ENCODE measurements at regions of chrX and their contacts with region 1.

Region 1: GRCh38 chrX:48521353-48522243 is at the start of gene EBP:
- DNase-seq: peak; percentile 87 to 97 (median 92)
- ATAC-seq: peak; percentile 96
- H3K4me3 ChIP-seq: peak within 1 kb of the TSS; percentile 76
- H3K4me3 Mint-ChIP-seq: peak within 1 kb of the TSS; percentile 92
- H3K27ac ChIP-seq: peak within 1 kb of the TSS; percentile 65
- H3K27ac Mint-ChIP-seq: peak within 1 kb of the TSS; percentile 89
- H3K4me1 ChIP-seq: peaks cover 41% of the 10 kb centered on the region
- H3K4me1 Mint-ChIP-seq: peaks cover 35% of the 10 kb centered on the region
- H3K27me3 ChIP-seq: no peaks in the 10 kb centered on the region
- H3K27me3 Mint-ChIP-seq: no peaks in the 10 kb centered on the region
- CTCF ChIP-seq: no peak
- total RNA-seq, gene EBP: 38.1 to 41.1 TPM

Region 2: GRCh38 chrX:48058621-48059295 is 462.8 kb before region 1 on chrX:
- CTCF ChIA-PET with region 1: no interaction called
- POLR2A ChIA-PET with region 1: no interaction called
- intact Hi-C with region 1: no loop called
- DNase-seq: no peak
- ATAC-seq: no peak
- H3K4me3 ChIP-seq: no peak overlapping the region
- H3K4me3 Mint-ChIP-seq: no peak overlapping the region
- H3K27ac ChIP-seq: no peak overlapping the region
- H3K27ac Mint-ChIP-seq: no peak overlapping the region
- H3K4me1 ChIP-seq: no peaks in the 10 kb centered on the region
- H3K4me1 Mint-ChIP-seq: no peaks in the 10 kb centered on the region
- H3K27me3 ChIP-seq: no peaks in the 10 kb centered on the region
- H3K27me3 Mint-ChIP-seq: no peaks in the 10 kb centered on the region
- CTCF ChIP-seq: no peak

Region 3: GRCh38 chrX:48498374-48498809 is 23.2 kb before region 1 on chrX:
- CTCF ChIA-PET with region 1: no interaction called
- POLR2A ChIA-PET with region 1: no interaction called
- intact Hi-C with region 1: no loop called
- DNase-seq: no peak
- ATAC-seq: no peak
- H3K4me3 ChIP-seq: no peak overlapping the region
- H3K4me3 Mint-ChIP-seq: no peak overlapping the region
- H3K27ac ChIP-seq: no peak overlapping the region
- H3K27ac Mint-ChIP-seq: no peak overlapping the region
- H3K4me1 ChIP-seq: no peaks in the 10 kb centered on the region
- H3K4me1 Mint-ChIP-seq: no peaks in the 10 kb centered on the region
- H3K27me3 ChIP-seq: no peaks in the 10 kb centered on the region
- H3K27me3 Mint-ChIP-seq: no peaks in the 10 kb centered on the region
- CTCF ChIP-seq: no peak

Region 4: DNA sequence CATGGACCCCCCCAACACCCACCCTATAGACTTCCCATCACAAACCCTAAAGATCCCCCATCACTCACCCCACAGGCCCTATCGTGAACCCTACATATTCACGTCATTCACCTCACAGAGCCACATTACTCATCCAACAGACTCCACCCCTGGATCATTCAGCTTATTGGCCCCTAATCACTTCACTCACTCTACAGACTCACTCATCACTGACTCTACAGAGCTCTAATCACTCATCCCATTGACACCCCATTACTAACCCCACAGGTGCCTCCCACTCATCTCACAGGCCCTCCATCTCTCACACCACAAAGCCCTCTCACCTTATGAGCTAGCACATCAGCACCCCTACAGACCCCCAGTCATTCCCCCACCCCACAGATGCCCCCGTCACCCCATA is 11.6 kb after region 1 on chrX:
- CTCF ChIA-PET with region 1: no interaction called
- POLR2A ChIA-PET with region 1: interaction called, 4 read pairs
- intact Hi-C with region 1: loop called in 1 of 2 experiments (anchors 1 kb)
- DNase-seq: no peak
- ATAC-seq: no peak
- H3K4me3 ChIP-seq: no peak overlapping the region
- H3K4me3 Mint-ChIP-seq: no peak overlapping the region
- H3K27ac ChIP-seq: no peak overlapping the region
- H3K27ac Mint-ChIP-seq: no peak overlapping the region
- H3K4me1 ChIP-seq: peaks cover 7% of the 10 kb centered on the region
- H3K4me1 Mint-ChIP-seq: no peaks in the 10 kb centered on the region
- H3K27me3 ChIP-seq: no peaks in the 10 kb centered on the region
- H3K27me3 Mint-ChIP-seq: no peaks in the 10 kb centered on the region
- CTCF ChIP-seq: no peak

Region 5: GRCh38 chrX:48597353-48598264 is 76.0 kb after region 1 on chrX and contains the start of gene WDR13:
- CTCF ChIA-PET with region 1: no interaction called
- POLR2A ChIA-PET with region 1: interaction called, 3 read pairs
- intact Hi-C with region 1: loop called in 1 of 2 experiments (anchors 5 kb)
- DNase-seq: peak; percentile 81 to 95 (median 90)
- ATAC-seq: peak; percentile 81
- H3K4me3 ChIP-seq: peak within 1 kb of the TSS; percentile 90
- H3K4me3 Mint-ChIP-seq: peak within 1 kb of the TSS; percentile 98
- H3K27ac ChIP-seq: peak within 1 kb of the TSS; percentile 96 to 99
- H3K27ac Mint-ChIP-seq: peak within 1 kb of the TSS; percentile 100
- H3K4me1 ChIP-seq: peaks cover 19% of the 10 kb centered on the region
- H3K4me1 Mint-ChIP-seq: peaks cover 15% of the 10 kb centered on the region
- H3K27me3 ChIP-seq: no peaks in the 10 kb centered on the region
- H3K27me3 Mint-ChIP-seq: no peaks in the 10 kb centered on the region
- CTCF ChIP-seq: no peak
- total RNA-seq, gene WDR13: 37.9 to 43.4 TPM

Region 6: GRCh38 chrX:49163555-49164419 is 642.2 kb after region 1 on chrX:
- CTCF ChIA-PET with region 1: no interaction called
- POLR2A ChIA-PET with region 1: no interaction called
- intact Hi-C with region 1: no loop called
- DNase-seq: peak; percentile 61 to 92 (median 78)
- ATAC-seq: peak; percentile 58
- H3K4me3 ChIP-seq: peak overlapping the region; percentile 50
- H3K4me3 Mint-ChIP-seq: peak overlapping the region; percentile 86
- H3K27ac ChIP-seq: peak overlapping the region; percentile 65 to 72
- H3K27ac Mint-ChIP-seq: peak overlapping the region; percentile 87
- H3K4me1 ChIP-seq: peaks cover 52% of the 10 kb centered on the region
- H3K4me1 Mint-ChIP-seq: peaks cover 28% of the 10 kb centered on the region
- H3K27me3 ChIP-seq: no peaks in the 10 kb centered on the region
- H3K27me3 Mint-ChIP-seq: no peaks in the 10 kb centered on the region
- CTCF ChIP-seq: peak; percentile 35

Measured in CD4-positive, alpha-beta T cell (primary cell).